Natural killer cell (primary cell): ENCODE measurements at regions of chr7 and their contacts with region 1.

Region 1: GRCh38 chr7:121449329-121449728 is 53.2 kb upstream of the FAM3C start:
- DNase-seq: no peak
- ATAC-seq: no peak
- H3K4me3 ChIP-seq: no peak overlapping the region
- H3K4me3 Mint-ChIP-seq: no peak overlapping the region
- H3K27ac ChIP-seq: no peak overlapping the region
- H3K27ac Mint-ChIP-seq: no peak overlapping the region
- H3K4me1 ChIP-seq: no peaks in the 10 kb centered on the region
- H3K4me1 Mint-ChIP-seq: no peaks in the 10 kb centered on the region
- H3K27me3 ChIP-seq: no peaks in the 10 kb centered on the region
- H3K27me3 Mint-ChIP-seq: no peaks in the 10 kb centered on the region
- CTCF ChIP-seq: no peak

Region 2: GRCh38 chr7:121323515-121324302 is 125.6 kb before region 1 on chr7:
- intact Hi-C with region 1: no loop called
- DNase-seq: no peak
- ATAC-seq: no peak
- H3K4me3 ChIP-seq: no peak overlapping the region
- H3K4me3 Mint-ChIP-seq: no peak overlapping the region
- H3K27ac ChIP-seq: no peak overlapping the region
- H3K27ac Mint-ChIP-seq: no peak overlapping the region
- H3K4me1 ChIP-seq: no peaks in the 10 kb centered on the region
- H3K4me1 Mint-ChIP-seq: peaks cover 0 to 2% of the 10 kb centered on the region in 2 donors
- H3K27me3 ChIP-seq: no peaks in the 10 kb centered on the region
- H3K27me3 Mint-ChIP-seq: peaks cover 38 to 52% of the 10 kb centered on the region in 2 donors
- CTCF ChIP-seq: no peak

Region 3: DNA sequence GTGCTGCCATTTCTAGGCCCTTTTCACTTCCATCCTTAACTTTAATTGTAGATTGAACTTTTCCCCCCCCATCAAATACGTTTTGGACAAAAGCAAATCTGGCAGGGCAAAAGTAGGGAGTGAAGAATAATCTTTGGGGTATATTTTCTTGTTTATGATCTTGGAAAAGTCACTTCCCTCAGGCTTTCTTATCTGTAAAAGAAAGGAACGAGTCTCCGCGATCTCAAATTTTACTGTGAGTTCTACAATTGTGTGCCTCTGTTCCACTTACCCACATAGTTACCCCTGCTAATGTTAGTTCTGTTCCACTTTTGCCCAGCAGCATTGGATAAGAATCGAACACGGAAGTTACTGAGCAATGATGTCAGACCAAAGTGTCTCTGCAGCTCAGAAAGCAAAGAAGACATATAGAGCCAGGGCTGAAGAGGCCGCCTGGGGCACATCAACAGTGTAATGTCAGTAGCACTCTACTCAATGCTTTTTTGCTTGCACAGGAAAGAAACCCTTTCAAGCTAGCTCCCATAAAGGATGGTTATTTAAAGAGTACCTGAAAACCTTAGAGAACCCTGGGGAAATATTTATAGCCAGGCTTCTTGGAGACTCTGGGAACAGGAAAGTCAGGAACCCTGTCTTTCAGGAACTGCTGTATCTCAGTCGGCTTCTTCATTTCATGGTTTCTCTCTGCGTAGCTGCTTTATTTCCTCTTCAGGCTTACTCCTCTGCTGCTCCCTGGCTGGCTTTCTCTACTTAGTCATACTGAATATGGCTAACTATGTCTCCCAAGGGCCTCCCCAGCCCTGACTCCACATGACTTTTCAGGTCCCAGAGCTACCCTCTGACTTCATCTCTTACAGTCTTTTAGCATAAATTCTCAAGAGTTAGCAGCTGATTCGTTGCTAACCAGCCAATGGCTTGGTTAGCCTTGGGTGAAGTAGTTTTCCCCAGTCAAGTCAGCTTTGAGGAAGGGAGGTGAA is 70.5 kb after region 1 on chr7:
- intact Hi-C with region 1: loop called (anchors 10 kb)
- DNase-seq: no peak
- ATAC-seq: peak in 1 of 3 donors; percentile 46
- H3K4me3 ChIP-seq: no peak overlapping the region
- H3K4me3 Mint-ChIP-seq: no peak overlapping the region
- H3K27ac ChIP-seq: no peak overlapping the region
- H3K27ac Mint-ChIP-seq: no peak overlapping the region
- H3K4me1 ChIP-seq: peaks cover 3% of the 10 kb centered on the region
- H3K4me1 Mint-ChIP-seq: peaks cover 19 to 31% of the 10 kb centered on the region in 2 donors
- H3K27me3 ChIP-seq: no peaks in the 10 kb centered on the region
- H3K27me3 Mint-ChIP-seq: no peaks in the 10 kb centered on the region
- CTCF ChIP-seq: no peak